ENCODE measurements at regions of chr12 and their contacts with region 1.

Region 1: GRCh38 chr12:1117970-1118563 is 127.0 kb downstream of the ERC1 start:
- DNase-seq: peak; percentile 63
- H3K4me3 ChIP-seq: no peak overlapping the region
- H3K27ac ChIP-seq: no peak overlapping the region
- H3K27me3 ChIP-seq: no peaks in the 10 kb centered on the region
- CTCF ChIP-seq: peak; percentile 93

Region 2: DNA sequence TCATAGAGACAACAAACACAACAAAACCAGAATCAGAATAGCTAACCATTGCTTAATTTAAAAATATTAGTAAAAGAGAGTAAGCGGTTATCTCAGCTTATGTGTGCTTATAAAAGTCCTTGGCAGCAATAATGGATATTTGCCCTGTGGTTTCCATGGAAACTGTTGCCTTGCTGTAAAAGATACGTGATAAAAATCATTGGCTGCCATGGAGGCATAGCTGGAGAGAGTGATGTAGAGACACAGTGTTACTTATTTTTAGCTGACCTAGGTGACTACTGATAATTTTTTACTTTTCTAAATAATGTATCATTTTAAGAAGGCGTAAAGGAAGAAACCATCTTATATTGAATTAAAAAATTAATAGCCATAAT is 34.2 kb before region 1 on chr12:
- CTCF ChIA-PET with region 1: no interaction called
- POLR2A ChIA-PET with region 1: no interaction called
- DNase-seq: peak; percentile 44
- H3K4me3 ChIP-seq: no peak overlapping the region
- H3K27ac ChIP-seq: no peak overlapping the region
- H3K27me3 ChIP-seq: no peaks in the 10 kb centered on the region
- CTCF ChIP-seq: no peak

Region 3: GRCh38 chr12:1147821-1148220 is 29.8 kb after region 1 on chr12:
- CTCF ChIA-PET with region 1: interaction called, 16 read pairs
- POLR2A ChIA-PET with region 1: no interaction called
- DNase-seq: no peak
- H3K4me3 ChIP-seq: no peak overlapping the region
- H3K27ac ChIP-seq: no peak overlapping the region
- H3K27me3 ChIP-seq: no peaks in the 10 kb centered on the region
- CTCF ChIP-seq: no peak

Region 4: GRCh38 chr12:1204581-1205121 is 86.6 kb after region 1 on chr12:
- CTCF ChIA-PET with region 1: interaction called, 15 read pairs
- POLR2A ChIA-PET with region 1: no interaction called
- DNase-seq: no peak
- H3K4me3 ChIP-seq: peak overlapping the region; percentile 53
- H3K27ac ChIP-seq: peak overlapping the region; percentile 32
- H3K27me3 ChIP-seq: no peaks in the 10 kb centered on the region
- CTCF ChIP-seq: no peak

Region 5: DNA sequence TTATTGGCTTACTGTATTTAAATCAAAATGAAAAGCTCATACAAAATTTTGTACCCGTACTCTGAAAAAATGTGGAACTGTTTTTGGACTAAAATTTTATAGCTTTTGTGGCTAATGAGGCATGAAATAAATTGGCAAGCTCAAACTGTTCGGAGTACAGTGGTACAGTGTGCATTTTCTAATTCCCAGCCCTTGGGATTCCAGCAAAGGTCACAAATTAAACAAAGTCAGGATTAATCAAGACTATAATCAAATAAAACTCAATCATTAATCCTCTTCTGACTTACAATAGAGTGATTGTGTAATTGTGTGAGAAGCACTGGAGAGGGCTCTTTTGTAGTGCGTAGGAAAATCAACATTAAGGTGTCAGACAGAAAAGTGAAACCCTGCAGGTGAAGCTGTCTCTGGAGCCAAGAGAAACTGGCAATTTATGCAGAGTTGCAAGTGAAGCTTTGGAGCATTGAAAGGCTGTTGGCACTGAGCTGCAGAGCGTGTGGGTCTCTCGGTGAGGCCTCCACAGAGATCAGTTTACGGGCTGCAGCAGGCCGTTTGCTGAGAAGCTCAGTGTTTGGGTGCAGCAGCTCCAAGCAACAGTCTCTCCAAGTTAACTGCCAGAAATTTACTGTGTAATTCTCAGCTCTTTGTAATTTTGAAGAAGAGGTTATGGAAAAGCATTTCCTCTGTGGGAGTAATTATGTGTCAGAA is 200.4 kb after region 1 on chr12:
- CTCF ChIA-PET with region 1: interaction called, 10 read pairs
- POLR2A ChIA-PET with region 1: no interaction called
- DNase-seq: peak; percentile 4
- H3K4me3 ChIP-seq: no peak overlapping the region
- H3K27ac ChIP-seq: peak overlapping the region; percentile 49
- H3K27me3 ChIP-seq: no peaks in the 10 kb centered on the region
- CTCF ChIP-seq: no peak

Region 6: DNA sequence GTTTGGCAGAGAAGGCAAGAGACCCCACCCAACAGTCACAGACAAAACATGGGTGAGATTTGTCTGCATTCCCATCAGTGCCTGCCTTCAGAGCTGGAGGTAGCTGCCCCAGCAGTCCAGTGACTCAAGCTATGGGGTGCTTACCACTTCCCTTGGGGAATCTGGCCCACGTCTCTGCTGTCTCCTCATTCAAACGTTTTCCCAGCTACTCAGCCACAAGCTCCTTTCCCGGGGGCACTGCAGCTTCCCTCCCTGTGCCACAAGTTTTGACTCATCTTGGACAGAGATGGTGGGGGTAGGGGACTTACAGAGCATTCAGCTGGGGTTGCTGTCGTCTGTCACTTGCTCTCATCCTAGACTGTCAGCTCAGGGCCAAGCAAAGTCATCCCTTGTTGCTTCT is 409.7 kb after region 1 on chr12:
- CTCF ChIA-PET with region 1: interaction called, 14 read pairs
- POLR2A ChIA-PET with region 1: no interaction called
- DNase-seq: no peak
- H3K4me3 ChIP-seq: no peak overlapping the region
- H3K27ac ChIP-seq: peak overlapping the region; percentile 57
- H3K27me3 ChIP-seq: no peaks in the 10 kb centered on the region
- CTCF ChIP-seq: no peak

Region 7: GRCh38 chr12:1605129-1606020 is 487.3 kb after region 1 on chr12:
- CTCF ChIA-PET with region 1: interaction called, 37 read pairs
- POLR2A ChIA-PET with region 1: no interaction called
- DNase-seq: peak; percentile 49
- H3K4me3 ChIP-seq: peak overlapping the region; percentile 52
- H3K27ac ChIP-seq: peak overlapping the region; percentile 65
- H3K27me3 ChIP-seq: no peaks in the 10 kb centered on the region
- CTCF ChIP-seq: peak; percentile 80

Measured in AG04450 (cell line).